ENCODE measurements at regions of chr6 and their contacts with region 1.

Region 1: GRCh38 chr6:41787219-41787917 is at the start of gene TOMM6:
- DNase-seq: peak; percentile 93 to 96
- H3K4me3 ChIP-seq: peak within 1 kb of the TSS; percentile 86
- H3K4me3 Mint-ChIP-seq: peak within 1 kb of the TSS; percentile 89
- H3K27ac Mint-ChIP-seq: peak within 1 kb of the TSS; percentile 98
- H3K4me1 ChIP-seq: peaks cover 7% of the 10 kb centered on the region; the same call in 1 of the 2 replicates
- H3K4me1 Mint-ChIP-seq: peaks cover 9% of the 10 kb centered on the region
- H3K27me3 ChIP-seq: no peaks in the 10 kb centered on the region
- H3K27me3 Mint-ChIP-seq: no peaks in the 10 kb centered on the region
- CTCF ChIP-seq: peak; percentile 82 to 89
- total RNA-seq, gene TOMM6: 224 and 260 TPM in 2 replicates

Region 2: GRCh38 chr6:41182069-41183034 is 605.0 kb before region 1 on chr6:
- CTCF ChIA-PET with region 1: no interaction called
- POLR2A ChIA-PET with region 1: no interaction called
- intact Hi-C with region 1: no loop called
- DNase-seq: peak; percentile 65 to 70
- H3K4me3 ChIP-seq: no peak overlapping the region
- H3K4me3 Mint-ChIP-seq: no peak overlapping the region
- H3K27ac Mint-ChIP-seq: no peak overlapping the region
- H3K4me1 ChIP-seq: no peaks in the 10 kb centered on the region
- H3K4me1 Mint-ChIP-seq: no peaks in the 10 kb centered on the region
- H3K27me3 ChIP-seq: no peaks in the 10 kb centered on the region
- H3K27me3 Mint-ChIP-seq: peaks cover 8% of the 10 kb centered on the region
- CTCF ChIP-seq: peak; percentile 57 to 83

Region 3: DNA sequence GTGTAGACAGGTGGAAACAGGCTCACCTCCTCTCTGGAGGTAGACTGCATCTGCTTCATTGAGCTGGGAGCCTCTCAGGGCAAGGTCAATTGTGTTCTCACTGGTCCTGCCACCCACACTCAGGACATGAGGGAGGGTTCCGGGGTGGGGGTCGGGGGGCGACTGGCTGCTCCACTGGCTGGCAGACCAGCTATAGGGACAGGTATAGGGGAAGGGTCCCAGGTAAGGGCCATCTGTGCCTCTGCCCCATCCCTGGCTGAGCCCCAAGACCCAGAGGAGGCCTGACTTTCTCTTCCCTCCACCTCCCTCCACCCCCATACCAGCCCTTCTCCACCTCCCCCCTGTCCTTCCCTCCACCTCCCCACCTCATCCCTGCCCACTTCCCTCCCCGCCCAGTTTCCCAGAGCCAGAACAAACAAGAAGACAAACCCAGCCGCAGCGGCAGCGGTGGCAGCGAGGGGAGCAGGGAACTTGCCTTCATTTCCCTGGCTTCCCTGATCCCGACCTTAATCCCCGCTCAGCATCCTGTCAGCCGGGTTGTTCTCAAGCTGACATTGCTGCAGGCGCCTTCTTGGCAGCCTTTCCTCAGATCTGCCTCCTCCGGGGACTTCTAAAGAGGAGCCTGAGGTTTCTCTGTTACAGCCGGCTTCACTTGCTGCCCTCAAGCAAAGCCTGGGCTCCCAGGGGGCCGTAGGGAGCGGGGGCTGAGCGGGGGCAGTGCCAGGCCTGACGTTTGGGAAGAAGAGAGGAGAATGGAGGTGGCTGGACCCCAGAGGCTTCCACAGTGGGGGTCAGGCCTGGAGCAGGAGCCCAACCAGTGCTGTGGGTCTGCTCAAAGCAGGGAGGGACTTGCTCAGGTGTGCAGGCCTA is 259.4 kb before region 1 on chr6:
- CTCF ChIA-PET with region 1: no interaction called
- POLR2A ChIA-PET with region 1: no interaction called
- intact Hi-C with region 1: no loop called
- DNase-seq: no peak
- H3K4me3 ChIP-seq: no peak overlapping the region
- H3K4me3 Mint-ChIP-seq: no peak overlapping the region
- H3K27ac Mint-ChIP-seq: peak overlapping the region; percentile 52
- H3K4me1 ChIP-seq: peaks cover 39% of the 10 kb centered on the region
- H3K4me1 Mint-ChIP-seq: peaks cover 63% of the 10 kb centered on the region
- H3K27me3 ChIP-seq: no peaks in the 10 kb centered on the region
- H3K27me3 Mint-ChIP-seq: no peaks in the 10 kb centered on the region
- CTCF ChIP-seq: no peak

Region 4: DNA sequence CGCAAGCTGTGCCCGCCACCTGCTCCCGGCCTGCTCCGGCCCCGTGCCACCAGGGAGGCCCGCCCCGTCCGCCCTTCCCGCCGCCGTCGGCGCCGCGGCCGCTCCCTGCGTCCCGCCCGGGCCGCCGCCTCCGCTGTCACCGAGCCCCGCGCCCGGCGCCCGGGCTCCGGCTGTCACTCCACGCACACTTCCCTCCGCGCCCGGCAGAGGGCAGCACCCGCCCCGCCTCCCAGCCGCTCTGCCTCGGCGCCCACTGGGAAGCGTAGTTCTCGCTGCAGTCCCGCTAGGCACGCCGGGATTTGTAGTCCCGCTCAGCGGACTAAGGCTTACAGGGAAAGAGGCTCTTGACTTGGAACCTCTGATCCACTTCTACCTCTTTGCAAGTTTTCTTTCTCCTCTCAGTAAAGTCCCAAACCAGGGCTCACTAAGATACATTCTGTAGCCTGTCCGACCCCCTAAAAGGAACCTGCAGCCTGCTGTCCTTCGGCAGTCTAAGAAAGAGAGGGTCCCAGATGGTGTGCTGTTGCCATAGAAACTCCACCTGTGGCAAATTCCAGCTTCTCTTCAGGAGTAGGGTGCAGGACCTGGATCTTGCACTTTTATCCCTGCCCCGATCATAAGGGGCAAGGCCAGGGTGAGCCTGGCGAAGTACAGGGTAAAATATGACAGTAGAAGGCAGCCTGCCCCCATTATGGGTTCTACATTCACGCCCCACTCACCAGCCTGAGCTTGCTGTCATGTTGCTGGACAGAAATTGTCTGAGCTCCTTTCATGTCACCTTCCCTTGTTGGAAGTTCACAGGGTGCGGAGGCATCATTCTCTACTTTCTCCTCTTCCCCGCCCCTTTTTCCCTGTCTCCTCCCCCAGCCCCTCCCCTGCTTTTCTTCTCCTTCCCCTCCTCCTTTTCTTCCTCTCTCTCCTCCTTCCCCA is 51.7 kb before region 1 on chr6 and contains the start of gene TFEB:
- CTCF ChIA-PET with region 1: interaction called, 23 read pairs
- POLR2A ChIA-PET with region 1: interaction called, 10 read pairs
- intact Hi-C with region 1: no loop called
- DNase-seq: peak; percentile 92 to 95
- H3K4me3 ChIP-seq: peak within 1 kb of the TSS; percentile 62
- H3K4me3 Mint-ChIP-seq: peak within 1 kb of the TSS; percentile 75
- H3K27ac Mint-ChIP-seq: peak within 1 kb of the TSS; percentile 61
- H3K4me1 ChIP-seq: peaks cover 38% of the 10 kb centered on the region
- H3K4me1 Mint-ChIP-seq: peaks cover 15% of the 10 kb centered on the region
- H3K27me3 ChIP-seq: no peaks in the 10 kb centered on the region
- H3K27me3 Mint-ChIP-seq: no peaks in the 10 kb centered on the region
- CTCF ChIP-seq: peak; percentile 87 to 88
- total RNA-seq, gene TFEB: 3.8 and 3.9 TPM in 2 replicates

Region 5: DNA sequence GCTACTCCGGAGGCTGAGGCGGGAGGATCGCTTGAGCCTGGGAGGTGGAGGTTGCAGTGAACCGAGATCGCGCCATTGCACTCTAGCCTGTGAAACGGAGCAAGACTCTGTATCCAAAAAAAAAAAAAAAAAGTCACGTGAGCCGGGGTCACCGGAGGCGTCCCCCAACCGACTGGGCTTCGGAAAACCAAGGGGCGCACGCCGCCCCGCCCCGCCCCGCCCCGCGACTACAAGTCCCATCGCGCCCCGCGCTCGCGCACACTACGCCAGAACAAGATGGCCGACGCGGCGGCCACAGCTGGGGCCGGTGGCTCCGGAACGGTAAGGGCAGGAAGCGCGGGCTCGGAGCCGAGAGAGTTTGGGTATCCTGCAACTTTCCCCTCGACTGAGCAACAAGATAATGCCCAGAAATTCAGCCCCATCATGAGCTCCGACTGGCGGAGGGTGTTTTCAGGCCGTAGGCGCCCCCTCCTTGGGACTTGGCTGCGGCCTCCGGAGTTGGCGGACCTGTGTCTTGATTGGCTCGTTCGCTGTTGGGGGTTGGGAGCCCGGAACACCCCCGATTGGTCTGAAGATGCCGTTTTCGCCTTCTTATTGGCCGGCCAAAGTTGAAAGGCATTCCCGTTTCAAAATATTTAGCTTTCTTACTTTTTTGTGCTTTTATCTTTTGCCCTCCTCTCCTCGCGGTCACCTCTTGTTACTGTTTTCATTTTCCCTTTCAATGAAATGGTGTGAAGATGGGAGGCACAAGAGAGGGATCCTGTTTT is 263.1 kb after region 1 on chr6 and contains the start of gene TAF8:
- CTCF ChIA-PET with region 1: interaction called, 16 read pairs
- POLR2A ChIA-PET with region 1: interaction called, 4 read pairs
- intact Hi-C with region 1: no loop called
- DNase-seq: peak; percentile 92 to 93
- H3K4me3 ChIP-seq: peak within 1 kb of the TSS; percentile 71
- H3K4me3 Mint-ChIP-seq: peak within 1 kb of the TSS; percentile 95
- H3K27ac Mint-ChIP-seq: peak within 1 kb of the TSS; percentile 98
- H3K4me1 ChIP-seq: peaks cover 14% of the 10 kb centered on the region; the same call in 1 of the 2 replicates
- H3K4me1 Mint-ChIP-seq: no peaks in the 10 kb centered on the region
- H3K27me3 ChIP-seq: no peaks in the 10 kb centered on the region
- H3K27me3 Mint-ChIP-seq: no peaks in the 10 kb centered on the region
- CTCF ChIP-seq: no peak
- total RNA-seq, gene TAF8: 35.0 and 37.7 TPM in 2 replicates